Sigmoid colon (tissue), 7 donors: ENCODE measurements at regions of chr14 and their contacts with region 1.

Region 1: DNA sequence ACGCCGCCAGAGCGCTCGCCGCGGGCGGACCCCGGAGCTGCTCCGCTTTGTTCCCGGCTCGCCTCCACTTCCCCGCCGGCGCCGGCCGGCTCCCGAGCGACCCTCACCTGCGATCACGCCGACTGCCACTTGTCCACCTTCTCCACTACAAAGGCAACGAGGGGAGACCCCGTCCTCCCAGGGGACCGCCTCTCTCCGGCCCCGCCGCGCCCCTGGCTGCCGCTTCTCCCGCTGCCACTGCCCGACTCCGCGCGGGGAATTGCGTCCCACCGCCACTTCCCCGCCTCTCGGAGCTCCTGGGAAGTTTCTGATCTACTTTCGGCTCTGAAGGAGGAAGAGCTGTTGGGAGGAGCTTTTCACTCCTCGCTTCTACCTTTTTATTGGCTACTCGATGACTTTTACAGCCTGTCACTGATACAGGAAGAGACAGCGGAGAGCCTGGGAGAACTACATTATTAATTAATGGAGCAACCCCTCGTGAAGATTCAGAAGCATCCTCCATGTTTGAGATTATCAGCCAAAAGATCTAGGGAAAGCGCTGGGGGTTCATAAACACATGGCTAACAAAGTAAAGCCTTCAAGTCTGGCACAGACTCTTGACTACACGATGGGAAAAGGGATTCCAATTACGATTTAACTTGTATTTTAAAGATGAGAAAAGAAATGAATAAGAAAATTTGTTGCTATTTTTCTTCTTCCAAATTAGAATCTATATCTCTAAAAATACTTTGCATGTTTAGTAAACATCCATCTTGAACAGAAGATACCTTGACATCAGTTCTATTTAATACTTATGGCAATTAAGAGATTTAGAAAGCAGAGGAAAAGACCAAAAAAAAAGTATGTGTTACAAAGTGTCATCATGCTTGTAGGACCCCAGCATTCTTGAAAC is at the start of gene BAZ1A:
- DNase-seq: peak; percentile 83
- H3K4me3 ChIP-seq: peak within 1 kb of the TSS; percentile 66 to 98 (median 92)
- H3K27ac ChIP-seq: peak within 1 kb of the TSS; percentile 97 to 99 (median 98)
- H3K4me1 ChIP-seq: peaks cover 0 to 13% (median 5%) of the 10 kb centered on the region in 4 donors
- H3K27me3 ChIP-seq: no peaks in the 10 kb centered on the region
- CTCF ChIP-seq: peak in 2 of 4 experiments; percentile 15 to 25
- EP300 ChIP-seq: no peak
- POLR2A ChIP-seq: peak; percentile 71 to 88
- total RNA-seq, gene BAZ1A: 18.2 to 25.2 (median 21.6) TPM

Region 2: GRCh38 chr14:34982417-34983147 is 107.3 kb after region 1 on chr14 and contains the start of gene SRP54:
- intact Hi-C with region 1: loop called (anchors 1 kb)
- DNase-seq: peak; percentile 100
- H3K4me3 ChIP-seq: peak within 1 kb of the TSS; percentile 70 to 88 (median 78)
- H3K27ac ChIP-seq: peak within 1 kb of the TSS; percentile 93 to 98 (median 94)
- H3K4me1 ChIP-seq: peaks cover 0 to 38% (median 34%) of the 10 kb centered on the region in 4 donors
- H3K27me3 ChIP-seq: no peaks in the 10 kb centered on the region
- CTCF ChIP-seq: no peak
- EP300 ChIP-seq: no peak
- POLR2A ChIP-seq: peak; percentile 75 to 85
- total RNA-seq, gene SRP54: 29.9 to 36.1 (median 34.6) TPM